Activated B cell treated with CpG ODN at 0.5 μM for 24 hours (primary cell): ENCODE measurements at regions of chr3 and their contacts with region 1.

Region 1: DNA sequence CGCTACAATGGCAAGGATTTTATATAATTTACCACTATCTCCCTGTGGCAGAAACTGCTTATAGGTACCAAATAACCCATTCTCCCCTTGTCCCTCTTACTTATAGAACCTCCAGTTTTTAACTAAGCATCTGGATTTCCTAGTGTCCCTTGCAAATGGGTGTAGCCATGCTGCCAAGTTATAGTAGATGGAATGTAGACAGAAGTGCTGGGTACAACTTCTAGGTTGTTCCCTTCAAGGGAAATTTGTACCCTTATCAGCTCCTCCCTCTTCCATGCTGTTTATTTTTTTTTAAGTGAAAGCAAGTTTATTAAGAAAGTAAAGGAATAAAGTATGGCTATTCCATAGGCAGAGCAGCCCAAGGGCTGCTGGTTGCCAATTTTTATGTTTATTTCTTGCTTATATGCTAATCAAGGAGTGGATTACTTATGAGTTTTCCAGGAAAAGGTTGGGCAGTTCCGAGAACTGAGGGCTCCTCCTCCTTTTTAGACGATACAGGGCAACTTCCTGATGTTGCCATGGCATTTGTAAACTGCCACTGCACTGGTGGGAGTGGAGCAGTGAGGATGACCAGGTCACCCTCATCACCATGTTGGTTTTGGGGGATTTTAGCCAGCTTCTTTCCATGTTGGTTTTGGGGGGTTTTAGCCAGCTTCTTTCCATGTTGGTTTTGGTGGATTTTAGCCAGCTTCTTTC is 40.1 kb upstream of the TM4SF19 start:
- DNase-seq: no peak
- ATAC-seq: no peak
- H3K4me3 Mint-ChIP-seq: no peak overlapping the region
- H3K27ac Mint-ChIP-seq: no peak overlapping the region
- H3K4me1 Mint-ChIP-seq: peaks cover 5% of the 10 kb centered on the region
- H3K27me3 Mint-ChIP-seq: no peaks in the 10 kb centered on the region
- CTCF ChIP-seq: no peak

Region 2: GRCh38 chr3:196412704-196413103 is 34.4 kb after region 1 on chr3:
- CTCF ChIA-PET with region 1: no interaction called
- POLR2A ChIA-PET with region 1: no interaction called
- intact Hi-C with region 1: loop called (anchors 5 kb)
- DNase-seq: no peak
- ATAC-seq: peak; percentile 71
- H3K4me3 Mint-ChIP-seq: peak overlapping the region; percentile 8
- H3K27ac Mint-ChIP-seq: no peak overlapping the region
- H3K4me1 Mint-ChIP-seq: peaks cover 61% of the 10 kb centered on the region
- H3K27me3 Mint-ChIP-seq: no peaks in the 10 kb centered on the region
- CTCF ChIP-seq: no peak

Region 3: DNA sequence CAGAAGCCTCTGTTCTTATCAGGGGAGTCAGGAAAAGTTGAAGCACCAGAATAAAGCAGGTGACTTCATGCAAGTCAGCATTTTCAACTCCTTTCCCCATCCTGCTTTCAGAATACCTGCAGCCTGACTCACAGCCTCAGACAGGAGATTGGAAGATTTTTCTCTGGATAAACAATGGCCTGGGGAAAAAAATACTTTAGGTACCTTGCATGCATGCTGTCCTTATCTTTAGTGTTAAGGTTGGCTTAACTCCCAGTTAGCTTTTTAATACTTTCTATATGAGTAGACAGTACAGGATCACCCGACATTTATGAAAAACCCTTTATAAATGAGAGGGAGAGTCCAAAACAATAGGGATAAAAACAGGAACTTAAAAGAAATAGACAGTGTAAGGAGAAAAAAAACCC is 414.9 kb after region 1 on chr3:
- CTCF ChIA-PET with region 1: no interaction called
- POLR2A ChIA-PET with region 1: no interaction called
- intact Hi-C with region 1: no loop called
- DNase-seq: no peak
- ATAC-seq: no peak
- H3K4me3 Mint-ChIP-seq: no peak overlapping the region
- H3K27ac Mint-ChIP-seq: no peak overlapping the region
- H3K4me1 Mint-ChIP-seq: peaks cover 7% of the 10 kb centered on the region
- H3K27me3 Mint-ChIP-seq: no peaks in the 10 kb centered on the region
- CTCF ChIP-seq: no peak